Sigmoid colon (tissue), 7 donors: ENCODE measurements at regions of chr3 and their contacts with region 1.

Region 1: GRCh38 chr3:19954676-19955075 is 7.8 kb downstream of the RAB5A start:
- DNase-seq: no peak
- H3K4me3 ChIP-seq: no peak overlapping the region
- H3K27ac ChIP-seq: no peak overlapping the region
- H3K4me1 ChIP-seq: peaks cover 0 to 56% (median 16%) of the 10 kb centered on the region in 4 donors
- H3K27me3 ChIP-seq: no peaks in the 10 kb centered on the region
- CTCF ChIP-seq: no peak
- EP300 ChIP-seq: no peak
- POLR2A ChIP-seq: no peak

Region 2: DNA sequence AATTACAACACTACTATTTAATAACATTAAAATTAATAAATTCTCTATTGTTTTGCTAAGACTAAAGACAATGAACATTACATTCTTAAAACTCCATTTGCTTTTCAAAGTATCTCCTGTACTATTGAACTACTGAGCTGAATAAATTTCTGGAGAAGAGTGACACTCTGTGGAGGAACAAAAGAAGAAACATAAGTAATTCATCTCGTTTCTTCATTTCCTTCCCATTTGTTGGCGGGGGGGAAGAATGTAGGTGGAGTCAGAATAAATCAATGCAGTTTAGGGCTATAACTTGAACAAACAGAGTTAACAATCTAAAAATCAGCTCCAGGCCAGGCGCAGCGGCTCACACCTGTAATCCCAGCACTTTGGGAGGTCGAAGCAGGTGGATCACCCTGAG is 53.3 kb before region 1 on chr3:
- intact Hi-C with region 1: no loop called
- DNase-seq: no peak
- H3K4me3 ChIP-seq: no peak overlapping the region
- H3K27ac ChIP-seq: no peak overlapping the region
- H3K4me1 ChIP-seq: no peaks in the 10 kb centered on the region
- H3K27me3 ChIP-seq: no peaks in the 10 kb centered on the region
- CTCF ChIP-seq: no peak
- EP300 ChIP-seq: no peak
- POLR2A ChIP-seq: no peak

Region 3: GRCh38 chr3:19994796-19995195 is 40.1 kb after region 1 on chr3:
- intact Hi-C with region 1: no loop called
- DNase-seq: no peak
- H3K4me3 ChIP-seq: no peak overlapping the region
- H3K27ac ChIP-seq: no peak overlapping the region
- H3K4me1 ChIP-seq: no peaks in the 10 kb centered on the region
- H3K27me3 ChIP-seq: no peaks in the 10 kb centered on the region
- CTCF ChIP-seq: no peak
- EP300 ChIP-seq: no peak
- POLR2A ChIP-seq: no peak

Region 4: DNA sequence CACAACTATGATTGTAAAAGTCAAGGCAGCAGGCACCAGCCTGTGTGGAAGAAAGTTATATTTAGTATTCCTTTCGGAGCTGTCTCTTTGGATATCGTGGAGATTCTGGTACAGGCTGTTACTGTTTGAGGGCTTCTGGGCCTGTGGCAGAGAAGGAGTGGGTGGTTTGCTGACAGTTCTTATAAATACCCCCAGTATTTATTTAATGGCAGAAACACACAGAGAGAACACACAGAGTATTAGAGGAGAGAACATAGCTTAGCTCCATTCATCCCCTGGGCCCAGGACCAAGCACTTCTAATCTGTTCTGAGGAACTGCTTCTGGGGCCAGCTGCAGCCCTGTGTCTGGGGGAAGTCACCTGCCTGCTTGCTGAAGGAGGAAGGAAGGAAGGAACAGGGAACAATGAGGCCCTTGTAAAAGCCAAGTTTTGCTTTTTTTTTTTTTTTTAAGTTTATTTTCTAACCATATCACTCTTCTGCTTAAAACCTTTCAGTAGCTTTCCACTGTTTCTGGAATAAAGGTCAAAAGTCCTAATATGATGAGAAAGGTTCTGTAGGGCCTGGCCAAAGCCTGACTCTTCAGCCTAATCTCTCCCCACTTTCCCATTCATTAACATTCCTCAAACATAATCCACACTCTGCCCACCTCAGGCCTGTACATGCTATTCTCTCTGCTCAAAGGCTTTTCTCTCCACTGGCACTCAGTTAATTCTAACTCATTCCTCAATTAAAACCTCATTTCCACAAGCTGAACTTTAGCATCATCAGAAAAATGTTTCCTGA is 69.1 kb after region 1 on chr3:
- intact Hi-C with region 1: loop called (anchors 5 kb)
- DNase-seq: peak; percentile 76
- H3K4me3 ChIP-seq: no peak overlapping the region
- H3K27ac ChIP-seq: peak overlapping the region; percentile 50 to 67 (median 66)
- H3K4me1 ChIP-seq: peaks cover 0 to 15% (median 13%) of the 10 kb centered on the region in 4 donors
- H3K27me3 ChIP-seq: no peaks in the 10 kb centered on the region
- CTCF ChIP-seq: no peak
- EP300 ChIP-seq: no peak
- POLR2A ChIP-seq: no peak